CD4-positive, alpha-beta T cell (primary cell): ENCODE measurements at regions of chr12 and their contacts with region 1.

Region 1: GRCh38 chr12:12032851-12033588 is 37.7 kb upstream of the BCL2L14 start:
- DNase-seq: peak; percentile 46 to 90 (median 66)
- ATAC-seq: peak; percentile 84
- H3K4me3 ChIP-seq: peak overlapping the region; percentile 62
- H3K4me3 Mint-ChIP-seq: peak overlapping the region; percentile 83
- H3K27ac ChIP-seq: peak overlapping the region in 1 of 2 donors; percentile 41
- H3K27ac Mint-ChIP-seq: peak overlapping the region; percentile 84
- H3K4me1 ChIP-seq: peaks cover 19% of the 10 kb centered on the region
- H3K4me1 Mint-ChIP-seq: peaks cover 22% of the 10 kb centered on the region
- H3K27me3 ChIP-seq: no peaks in the 10 kb centered on the region
- H3K27me3 Mint-ChIP-seq: no peaks in the 10 kb centered on the region
- CTCF ChIP-seq: peak; percentile 90

Region 2: GRCh38 chr12:10771132-10771733 is 1261.8 kb before region 1 on chr12:
- CTCF ChIA-PET with region 1: no interaction called
- POLR2A ChIA-PET with region 1: no interaction called
- intact Hi-C with region 1: loop called in 1 of 2 experiments (anchors 1 kb)
- DNase-seq: peak in 3 of 14 experiments; percentile 61 to 69 (median 65)
- ATAC-seq: peak; percentile 76
- H3K4me3 ChIP-seq: no peak overlapping the region
- H3K4me3 Mint-ChIP-seq: no peak overlapping the region
- H3K27ac ChIP-seq: no peak overlapping the region
- H3K27ac Mint-ChIP-seq: no peak overlapping the region
- H3K4me1 ChIP-seq: no peaks in the 10 kb centered on the region
- H3K4me1 Mint-ChIP-seq: no peaks in the 10 kb centered on the region
- H3K27me3 ChIP-seq: peaks cover 0 to 32% of the 10 kb centered on the region in 2 experiments
- H3K27me3 Mint-ChIP-seq: peaks cover 46% of the 10 kb centered on the region
- CTCF ChIP-seq: peak; percentile 75

Region 3: DNA sequence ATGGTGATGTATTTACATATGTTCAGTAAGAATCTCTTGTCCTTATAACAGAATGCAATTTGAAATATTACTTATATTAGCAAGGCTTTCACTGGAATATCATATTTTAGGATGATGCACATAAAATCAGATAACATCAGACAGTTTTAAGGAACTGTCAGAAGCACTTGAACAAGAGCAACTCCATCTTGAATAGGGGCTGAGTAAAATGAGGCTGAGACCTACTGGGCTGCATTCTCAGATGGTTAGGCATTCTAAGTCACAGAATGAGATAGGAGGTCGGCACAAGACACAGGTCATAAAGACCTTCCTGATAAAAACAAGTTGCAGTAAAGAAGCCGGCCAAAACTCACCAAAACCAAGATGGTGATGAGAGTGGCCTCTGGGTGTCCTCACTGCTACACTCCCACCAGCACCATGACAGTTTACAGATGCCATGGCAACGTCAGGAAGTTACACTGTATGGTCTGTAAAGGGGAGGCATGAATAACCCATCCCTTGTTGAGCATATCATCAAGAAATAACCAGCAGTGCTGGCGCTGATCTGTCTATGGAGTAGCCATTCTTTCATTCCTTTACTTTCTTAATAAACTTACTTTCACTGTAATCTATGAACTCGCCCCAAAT is 411.1 kb before region 1 on chr12:
- CTCF ChIA-PET with region 1: interaction called, 4 read pairs
- POLR2A ChIA-PET with region 1: no interaction called
- intact Hi-C with region 1: loop called in 1 of 2 experiments (anchors 2 kb)
- DNase-seq: peak in 10 of 14 experiments; percentile 6 to 57 (median 15)
- ATAC-seq: peak; percentile 34
- H3K4me3 ChIP-seq: no peak overlapping the region
- H3K4me3 Mint-ChIP-seq: no peak overlapping the region
- H3K27ac ChIP-seq: no peak overlapping the region
- H3K27ac Mint-ChIP-seq: no peak overlapping the region
- H3K4me1 ChIP-seq: no peaks in the 10 kb centered on the region
- H3K4me1 Mint-ChIP-seq: no peaks in the 10 kb centered on the region
- H3K27me3 ChIP-seq: no peaks in the 10 kb centered on the region
- H3K27me3 Mint-ChIP-seq: no peaks in the 10 kb centered on the region
- CTCF ChIP-seq: peak; percentile 37

Region 4: DNA sequence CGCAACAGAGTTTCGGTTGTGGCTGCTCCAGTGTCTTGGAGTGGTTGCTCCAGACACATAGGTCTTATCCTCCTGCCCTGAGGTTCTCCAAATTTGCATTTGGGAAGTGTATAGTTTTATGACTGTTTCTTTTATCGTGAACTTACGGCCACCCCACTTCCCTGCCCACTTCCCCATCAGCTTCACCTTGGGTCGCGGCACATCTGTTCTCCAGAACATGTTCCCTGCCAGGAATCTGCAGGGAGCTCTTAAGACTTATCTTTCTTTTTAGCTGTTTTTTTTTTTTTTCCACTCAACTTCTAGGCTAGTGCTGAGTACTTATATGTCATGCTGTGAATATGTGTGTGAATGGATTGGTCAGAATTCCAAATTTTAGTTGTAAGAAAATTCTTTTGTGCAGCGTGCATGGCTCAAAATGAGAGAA is 308.1 kb before region 1 on chr12:
- CTCF ChIA-PET with region 1: interaction called, 4 read pairs
- POLR2A ChIA-PET with region 1: interaction called, 4 read pairs
- intact Hi-C with region 1: loop called in 1 of 2 experiments (anchors 5 kb)
- DNase-seq: no peak
- ATAC-seq: no peak
- H3K4me3 ChIP-seq: no peak overlapping the region
- H3K4me3 Mint-ChIP-seq: no peak overlapping the region
- H3K27ac ChIP-seq: no peak overlapping the region
- H3K27ac Mint-ChIP-seq: no peak overlapping the region
- H3K4me1 ChIP-seq: peaks cover 44% of the 10 kb centered on the region
- H3K4me1 Mint-ChIP-seq: peaks cover 52% of the 10 kb centered on the region
- H3K27me3 ChIP-seq: no peaks in the 10 kb centered on the region
- H3K27me3 Mint-ChIP-seq: no peaks in the 10 kb centered on the region
- CTCF ChIP-seq: no peak

Region 5: DNA sequence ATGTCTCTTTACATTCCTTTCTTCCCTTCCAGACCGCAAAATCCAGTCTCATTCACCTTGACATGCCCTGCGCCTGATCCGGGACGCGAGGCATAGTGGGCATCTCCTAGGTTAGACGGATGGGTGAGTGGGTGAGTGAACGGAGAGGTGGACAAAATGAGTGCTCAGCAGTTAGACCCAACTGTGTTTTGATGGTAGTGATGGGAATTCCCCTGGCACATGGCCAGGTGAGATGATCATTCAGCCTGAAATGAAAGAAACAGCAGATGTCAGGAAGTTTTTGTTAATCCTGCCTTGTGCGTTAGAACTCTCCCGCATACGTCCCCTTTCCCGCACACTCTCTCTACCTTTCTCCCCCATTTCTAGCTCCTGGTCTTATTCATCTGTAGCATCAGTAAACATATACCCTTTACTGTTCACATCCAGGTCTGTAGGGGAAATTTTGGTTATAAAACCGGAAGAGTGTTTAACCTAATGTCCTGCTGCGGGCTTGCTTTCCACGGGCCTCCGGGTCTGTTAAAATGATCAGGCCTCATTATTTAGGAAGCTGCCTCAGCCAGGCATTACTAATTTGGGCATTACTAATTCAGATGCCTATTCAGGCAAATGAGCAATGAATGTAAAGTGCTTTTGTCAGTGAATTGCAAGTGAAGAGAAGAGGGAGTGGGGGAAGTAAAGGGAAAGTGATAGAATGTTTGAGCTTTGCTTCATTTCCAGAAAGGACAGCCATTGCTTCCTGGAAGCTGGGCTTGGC is 210.8 kb before region 1 on chr12:
- CTCF ChIA-PET with region 1: interaction called, 3 read pairs
- POLR2A ChIA-PET with region 1: no interaction called
- intact Hi-C with region 1: loop called (anchors 5 to 10 kb)
- DNase-seq: peak in 11 of 14 experiments; percentile 8 to 83 (median 30)
- ATAC-seq: peak; percentile 69
- H3K4me3 ChIP-seq: no peak overlapping the region
- H3K4me3 Mint-ChIP-seq: peak overlapping the region; percentile 18
- H3K27ac ChIP-seq: peak overlapping the region in 1 of 2 donors; percentile 23
- H3K27ac Mint-ChIP-seq: peak overlapping the region; percentile 63
- H3K4me1 ChIP-seq: peaks cover 33% of the 10 kb centered on the region
- H3K4me1 Mint-ChIP-seq: peaks cover 44% of the 10 kb centered on the region
- H3K27me3 ChIP-seq: no peaks in the 10 kb centered on the region
- H3K27me3 Mint-ChIP-seq: no peaks in the 10 kb centered on the region
- CTCF ChIP-seq: no peak

Region 6: DNA sequence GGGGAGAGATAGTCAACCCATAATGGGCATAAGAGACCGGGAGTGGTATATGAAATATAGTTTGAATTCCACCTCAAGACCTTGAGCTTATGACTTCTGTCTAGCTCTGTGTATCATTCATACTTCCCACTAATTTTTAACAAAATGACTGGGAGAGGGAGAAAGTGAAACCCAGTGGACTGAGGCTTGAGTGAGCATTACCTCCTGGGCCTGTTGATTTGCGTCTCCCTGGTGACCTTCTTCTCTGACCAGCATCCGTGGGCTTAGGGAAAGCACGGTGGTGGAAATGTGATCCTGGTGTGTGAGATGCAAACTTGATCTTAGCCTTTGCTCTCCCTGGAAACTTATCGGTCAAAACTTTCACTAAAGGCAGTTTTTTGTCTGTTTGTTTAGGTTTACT is 170.2 kb before region 1 on chr12:
- CTCF ChIA-PET with region 1: no interaction called
- POLR2A ChIA-PET with region 1: no interaction called
- intact Hi-C with region 1: no loop called
- DNase-seq: no peak
- ATAC-seq: no peak
- H3K4me3 ChIP-seq: no peak overlapping the region
- H3K4me3 Mint-ChIP-seq: no peak overlapping the region
- H3K27ac ChIP-seq: no peak overlapping the region
- H3K27ac Mint-ChIP-seq: no peak overlapping the region
- H3K4me1 ChIP-seq: no peaks in the 10 kb centered on the region
- H3K4me1 Mint-ChIP-seq: no peaks in the 10 kb centered on the region
- H3K27me3 ChIP-seq: no peaks in the 10 kb centered on the region
- H3K27me3 Mint-ChIP-seq: no peaks in the 10 kb centered on the region
- CTCF ChIP-seq: no peak

Region 7: GRCh38 chr12:11998944-11999315 is 34.1 kb before region 1 on chr12:
- CTCF ChIA-PET with region 1: interaction called, 11 read pairs
- POLR2A ChIA-PET with region 1: interaction called, 3 read pairs
- intact Hi-C with region 1: no loop called
- DNase-seq: peak in 1 of 14 experiments; percentile 25
- ATAC-seq: peak; percentile 4
- H3K4me3 ChIP-seq: no peak overlapping the region
- H3K4me3 Mint-ChIP-seq: peak overlapping the region; percentile 59
- H3K27ac ChIP-seq: peak overlapping the region; percentile 28 to 40
- H3K27ac Mint-ChIP-seq: peak overlapping the region; percentile 97
- H3K4me1 ChIP-seq: peaks cover 29% of the 10 kb centered on the region
- H3K4me1 Mint-ChIP-seq: peaks cover 52% of the 10 kb centered on the region
- H3K27me3 ChIP-seq: no peaks in the 10 kb centered on the region
- H3K27me3 Mint-ChIP-seq: no peaks in the 10 kb centered on the region
- CTCF ChIP-seq: no peak

Region 8: GRCh38 chr12:12327802-12328201 is 294.8 kb after region 1 on chr12:
- CTCF ChIA-PET with region 1: no interaction called
- POLR2A ChIA-PET with region 1: interaction called, 4 read pairs
- intact Hi-C with region 1: loop called (anchors 1 to 2 kb)
- DNase-seq: peak in 5 of 14 experiments; percentile 7 to 82 (median 74)
- ATAC-seq: peak; percentile 92
- H3K4me3 ChIP-seq: no peak overlapping the region
- H3K4me3 Mint-ChIP-seq: no peak overlapping the region
- H3K27ac ChIP-seq: no peak overlapping the region
- H3K27ac Mint-ChIP-seq: peak overlapping the region; percentile 21
- H3K4me1 ChIP-seq: peaks cover 4% of the 10 kb centered on the region
- H3K4me1 Mint-ChIP-seq: peaks cover 14% of the 10 kb centered on the region
- H3K27me3 ChIP-seq: no peaks in the 10 kb centered on the region
- H3K27me3 Mint-ChIP-seq: no peaks in the 10 kb centered on the region
- CTCF ChIP-seq: peak; percentile 81